ENCODE measurements at regions of chr5 and their contacts with region 1.

Region 1: DNA sequence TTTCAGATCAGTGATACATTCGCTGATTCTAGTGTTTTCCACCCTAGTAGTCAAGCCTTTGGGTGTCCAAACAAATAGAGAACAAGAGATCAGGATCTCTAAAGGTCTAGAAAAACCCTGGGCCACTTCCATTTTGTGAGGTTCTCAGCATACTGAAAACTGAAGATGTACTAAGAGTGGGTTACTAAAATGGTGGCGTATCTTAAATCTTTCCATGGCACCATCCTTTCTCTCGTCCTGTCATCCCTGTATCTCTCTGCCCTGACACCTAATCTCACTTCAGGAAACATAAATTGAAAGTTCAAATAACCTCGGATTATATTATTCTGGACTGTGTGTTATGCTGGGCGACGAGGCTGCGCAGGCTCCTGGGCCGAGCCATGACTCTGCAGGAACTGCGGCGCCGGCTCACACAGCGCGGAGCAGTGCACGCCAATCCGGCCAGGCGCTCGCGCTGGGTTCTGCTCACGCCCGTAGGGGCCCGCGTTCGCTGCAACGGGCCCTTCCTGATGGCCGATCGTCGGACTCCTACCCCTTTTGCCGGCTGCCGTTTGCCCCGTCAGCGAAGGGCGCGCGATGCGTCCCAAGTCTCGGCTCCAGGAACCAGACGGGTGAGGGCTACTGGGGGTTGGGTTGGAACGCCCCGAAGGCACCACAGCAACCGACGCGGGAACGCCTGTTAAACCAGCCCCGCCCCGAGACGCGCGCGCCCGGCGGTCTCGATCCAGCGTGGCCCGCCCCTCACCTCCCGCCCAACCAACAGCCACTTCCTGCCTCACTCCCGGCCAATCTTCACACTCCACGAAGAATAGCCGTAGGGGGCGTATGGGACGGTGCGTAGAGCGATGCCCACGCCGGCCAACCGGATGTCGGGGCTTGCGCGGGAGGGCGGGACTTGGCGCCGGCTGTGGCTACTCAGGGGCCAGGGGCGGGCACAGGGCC is 503 bp upstream of the CANX start:
- DNase-seq: peak; percentile 100
- H3K4me3 Mint-ChIP-seq: peak overlapping the region; percentile 98
- H3K27ac Mint-ChIP-seq: peak overlapping the region; percentile 99
- H3K4me1 Mint-ChIP-seq: peaks cover 33% of the 10 kb centered on the region
- H3K27me3 Mint-ChIP-seq: no peaks in the 10 kb centered on the region
- CTCF ChIP-seq: no peak

Region 2: GRCh38 chr5:179559284-179560252 is 138.7 kb before region 1 on chr5:
- CTCF ChIA-PET with region 1: no interaction called
- intact Hi-C with region 1: loop called (anchors 10 kb)
- DNase-seq: peak; percentile 99
- H3K4me3 Mint-ChIP-seq: peak overlapping the region; percentile 88
- H3K27ac Mint-ChIP-seq: peak overlapping the region; percentile 95
- H3K4me1 Mint-ChIP-seq: peaks cover 9% of the 10 kb centered on the region
- H3K27me3 Mint-ChIP-seq: no peaks in the 10 kb centered on the region
- CTCF ChIP-seq: no peak

Region 3: GRCh38 chr5:179623003-179623880 is 75.0 kb before region 1 on chr5 and contains the start of gene HNRNPH1:
- CTCF ChIA-PET with region 1: no interaction called
- intact Hi-C with region 1: loop called (anchors 2 kb)
- DNase-seq: peak; percentile 99
- H3K4me3 Mint-ChIP-seq: peak within 1 kb of the TSS; percentile 96
- H3K27ac Mint-ChIP-seq: peak within 1 kb of the TSS; percentile 100
- H3K4me1 Mint-ChIP-seq: peaks cover 40% of the 10 kb centered on the region
- H3K27me3 Mint-ChIP-seq: peaks cover 7% of the 10 kb centered on the region
- CTCF ChIP-seq: no peak
- total RNA-seq, gene HNRNPH1: 765 and 870 TPM in 2 replicates

Region 4: GRCh38 chr5:179732417-179732917 is 34.2 kb after region 1 on chr5 and contains the start of gene MAML1:
- CTCF ChIA-PET with region 1: no interaction called
- intact Hi-C with region 1: loop called (anchors 5 kb)
- DNase-seq: peak; percentile 100
- H3K4me3 Mint-ChIP-seq: peak within 1 kb of the TSS; percentile 87
- H3K27ac Mint-ChIP-seq: peak within 1 kb of the TSS; percentile 89
- H3K4me1 Mint-ChIP-seq: peaks cover 35% of the 10 kb centered on the region
- H3K27me3 Mint-ChIP-seq: no peaks in the 10 kb centered on the region
- CTCF ChIP-seq: no peak
- total RNA-seq, gene MAML1: 37.0 and 38.5 TPM in 2 replicates

Measured in Calu3 (cell line).